Naive thymus-derived CD4-positive, alpha-beta T cell (primary cell): ENCODE measurements at regions of chr5 and their contacts with region 1.

Region 1: GRCh38 chr5:134176511-134177368 is at the start of gene SKP1:
- DNase-seq: peak; percentile 80 to 93 (median 91)
- ATAC-seq: peak; percentile 92
- H3K4me3 ChIP-seq: peak within 1 kb of the TSS; percentile 96
- H3K4me3 Mint-ChIP-seq: peak within 1 kb of the TSS; percentile 90 to 99 (median 97)
- H3K27ac ChIP-seq: peak within 1 kb of the TSS; percentile 100
- H3K27ac Mint-ChIP-seq: peak within 1 kb of the TSS; percentile 98 to 99 (median 98)
- H3K4me1 ChIP-seq: peaks cover 25 to 30% of the 10 kb centered on the region in 2 donors
- H3K4me1 Mint-ChIP-seq: peaks cover 28 to 39% (median 32%) of the 10 kb centered on the region in 7 donors
- H3K27me3 ChIP-seq: no peaks in the 10 kb centered on the region
- H3K27me3 Mint-ChIP-seq: peaks cover 0 to 4% (median 0%) of the 10 kb centered on the region in 5 donors
- total RNA-seq, gene SKP1: 224 to 287 (median 268) TPM

Region 2: GRCh38 chr5:133968049-133968980 is 208.4 kb before region 1 on chr5 and contains the start of gene C5orf15:
- CTCF ChIA-PET with region 1: no interaction called
- POLR2A ChIA-PET with region 1: no interaction called
- intact Hi-C with region 1: loop called (anchors 1 to 2 kb)
- DNase-seq: peak; percentile 72 to 93 (median 87)
- ATAC-seq: peak; percentile 98
- H3K4me3 ChIP-seq: peak within 1 kb of the TSS; percentile 90
- H3K4me3 Mint-ChIP-seq: peak within 1 kb of the TSS; percentile 93 to 100 (median 98)
- H3K27ac ChIP-seq: peak within 1 kb of the TSS; percentile 94
- H3K27ac Mint-ChIP-seq: peak within 1 kb of the TSS; percentile 92 to 99 (median 97)
- H3K4me1 ChIP-seq: peaks cover 10 to 16% of the 10 kb centered on the region in 2 donors
- H3K4me1 Mint-ChIP-seq: peaks cover 21 to 63% (median 52%) of the 10 kb centered on the region in 7 donors
- H3K27me3 ChIP-seq: no peaks in the 10 kb centered on the region
- H3K27me3 Mint-ChIP-seq: no peaks in the 10 kb centered on the region
- total RNA-seq, gene C5orf15: 11.1 to 33.6 (median 17.9) TPM

Region 3: DNA sequence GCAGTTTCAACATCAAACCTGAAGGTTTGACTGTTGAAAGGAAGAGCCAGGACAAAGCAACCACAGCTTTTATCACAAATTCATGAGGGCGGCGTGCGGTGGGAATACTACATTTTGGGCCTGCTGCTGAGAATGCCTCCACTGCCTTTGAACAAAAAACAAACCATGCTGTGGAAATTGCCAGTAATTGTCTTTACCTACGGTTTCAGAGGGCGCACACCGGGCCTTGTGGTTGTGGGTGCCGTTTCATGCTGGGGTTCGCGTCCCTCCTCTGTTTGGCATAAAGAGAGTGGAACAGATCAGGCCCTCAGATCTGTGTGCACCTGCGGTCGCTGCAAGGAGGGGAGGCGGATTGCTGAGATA is 89.8 kb before region 1 on chr5:
- CTCF ChIA-PET with region 1: no interaction called
- POLR2A ChIA-PET with region 1: no interaction called
- intact Hi-C with region 1: loop called in 1 of 2 experiments (anchors 1 kb)
- DNase-seq: peak; percentile 45 to 96 (median 93)
- ATAC-seq: peak; percentile 87
- H3K4me3 ChIP-seq: peak overlapping the region; percentile 32
- H3K4me3 Mint-ChIP-seq: peak overlapping the region; percentile 74 to 87 (median 82)
- H3K27ac ChIP-seq: peak overlapping the region; percentile 66
- H3K27ac Mint-ChIP-seq: peak overlapping the region; percentile 81 to 99 (median 96)
- H3K4me1 ChIP-seq: peaks cover 59 to 87% of the 10 kb centered on the region in 2 donors
- H3K4me1 Mint-ChIP-seq: peaks cover 47 to 98% (median 85%) of the 10 kb centered on the region in 7 donors
- H3K27me3 ChIP-seq: no peaks in the 10 kb centered on the region
- H3K27me3 Mint-ChIP-seq: peaks cover 0 to 24% (median 0%) of the 10 kb centered on the region in 5 donors

Region 4: DNA sequence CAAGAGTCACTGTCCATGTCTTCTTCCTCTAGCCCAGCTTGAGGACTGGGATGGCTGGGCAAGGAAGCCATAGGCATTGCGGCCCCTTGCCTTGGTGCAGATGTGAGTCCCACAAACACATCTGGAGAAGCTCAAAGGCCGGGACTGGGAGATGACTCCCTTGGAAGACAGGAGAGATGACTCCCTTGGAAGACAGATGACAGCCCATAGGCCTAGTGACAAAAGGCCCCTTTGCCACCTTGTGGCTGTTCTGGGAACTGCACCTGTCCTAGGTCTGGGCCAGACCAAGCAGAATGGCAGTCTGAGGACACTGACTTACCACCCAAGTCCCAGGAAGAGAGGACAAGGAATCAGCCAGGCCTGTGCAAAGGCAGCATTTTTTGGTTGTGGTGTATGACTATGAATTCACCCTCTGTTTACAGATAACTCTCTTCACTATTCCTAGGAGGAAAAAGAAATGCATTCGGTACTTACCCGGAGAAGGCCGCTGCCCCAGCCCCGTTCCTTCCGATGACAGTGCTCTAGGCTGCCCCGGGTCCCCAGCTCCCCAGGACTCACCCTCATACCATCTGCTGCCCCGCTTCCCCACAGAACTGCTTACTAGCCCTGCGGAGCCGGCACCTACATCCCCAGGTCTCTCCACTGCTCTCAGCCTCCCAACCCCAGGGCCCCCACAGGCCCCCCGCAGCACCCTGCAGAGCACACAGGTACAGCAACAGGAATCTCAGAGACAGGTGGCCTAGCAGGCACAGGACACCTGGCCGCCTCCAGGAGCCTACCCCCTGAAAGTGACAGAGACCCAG is 30.8 kb before region 1 on chr5:
- CTCF ChIA-PET with region 1: no interaction called
- POLR2A ChIA-PET with region 1: interaction called, 164 read pairs
- intact Hi-C with region 1: loop called in 1 of 2 experiments (anchors 1 kb)
- DNase-seq: peak; percentile 64 to 87 (median 77)
- ATAC-seq: peak; percentile 84
- H3K4me3 ChIP-seq: no peak overlapping the region
- H3K4me3 Mint-ChIP-seq: peak overlapping the region in 4 of 10 donors; percentile 18 to 54 (median 27)
- H3K27ac ChIP-seq: peak overlapping the region; percentile 63
- H3K27ac Mint-ChIP-seq: peak overlapping the region in 8 of 9 donors; percentile 75 to 93 (median 90)
- H3K4me1 ChIP-seq: peaks cover 5 to 29% of the 10 kb centered on the region in 2 donors
- H3K4me1 Mint-ChIP-seq: peaks cover 21 to 67% (median 46%) of the 10 kb centered on the region in 7 donors
- H3K27me3 ChIP-seq: no peaks in the 10 kb centered on the region
- H3K27me3 Mint-ChIP-seq: no peaks in the 10 kb centered on the region

Region 5: DNA sequence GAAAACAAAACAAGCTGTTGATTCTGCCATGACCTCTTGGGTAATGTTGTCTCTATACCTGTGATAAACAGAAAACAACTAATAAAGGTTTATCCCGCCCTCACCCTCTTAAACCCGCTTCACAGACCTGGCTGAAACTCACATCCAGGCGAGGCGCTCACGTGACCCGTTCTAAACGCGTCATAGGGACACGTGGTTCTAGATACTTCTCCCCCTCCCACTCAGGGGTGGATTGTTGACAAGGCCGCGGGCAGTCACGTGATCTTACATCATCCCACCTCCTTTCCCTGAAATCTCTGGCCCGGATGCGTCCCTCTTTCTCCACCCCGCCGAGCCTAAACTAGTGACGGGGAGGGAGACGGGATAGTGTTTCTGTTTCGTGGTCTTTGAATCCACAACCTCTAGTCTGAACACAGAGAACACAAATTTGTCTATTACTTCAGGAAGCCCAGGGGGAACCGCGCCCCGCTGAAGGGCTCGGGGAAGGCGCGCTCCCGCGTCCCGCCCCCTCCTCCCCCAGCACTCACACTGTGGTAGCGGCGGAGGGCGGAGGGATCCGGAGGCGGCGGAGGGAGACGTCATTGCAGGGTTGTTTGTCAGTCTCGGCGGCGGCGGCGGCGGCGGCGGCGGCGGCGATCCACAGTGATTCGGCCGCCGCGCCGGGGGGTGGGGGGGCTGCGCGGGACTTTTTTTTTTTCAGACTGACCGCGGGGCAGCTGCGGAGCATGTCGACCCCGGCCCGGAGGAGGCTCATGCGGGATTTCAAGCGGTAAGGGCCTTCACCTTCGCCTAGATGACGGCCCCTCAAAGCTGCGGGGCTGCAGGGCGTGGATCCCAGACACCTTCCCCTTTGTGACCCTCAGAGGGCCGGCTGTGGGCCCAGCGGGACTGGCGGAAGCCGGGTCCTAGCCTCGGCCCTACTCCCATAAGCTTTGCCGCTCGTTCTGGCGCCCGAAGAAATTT is 194.4 kb after region 1 on chr5 and contains the start of gene UBE2B:
- CTCF ChIA-PET with region 1: no interaction called
- POLR2A ChIA-PET with region 1: interaction called, 4 read pairs
- intact Hi-C with region 1: loop called (anchors 1 kb)
- DNase-seq: peak; percentile 96 to 99 (median 98)
- ATAC-seq: peak; percentile 86
- H3K4me3 ChIP-seq: peak within 1 kb of the TSS; percentile 94
- H3K4me3 Mint-ChIP-seq: peak within 1 kb of the TSS; percentile 82 to 99 (median 96)
- H3K27ac ChIP-seq: peak within 1 kb of the TSS; percentile 100
- H3K27ac Mint-ChIP-seq: peak within 1 kb of the TSS; percentile 97 to 100 (median 100)
- H3K4me1 ChIP-seq: peaks cover 25 to 38% of the 10 kb centered on the region in 2 donors
- H3K4me1 Mint-ChIP-seq: peaks cover 30 to 76% (median 60%) of the 10 kb centered on the region in 7 donors
- H3K27me3 ChIP-seq: no peaks in the 10 kb centered on the region
- H3K27me3 Mint-ChIP-seq: peaks cover 0 to 8% (median 0%) of the 10 kb centered on the region in 5 donors
- total RNA-seq, gene UBE2B: 91.4 to 141 (median 124) TPM

Region 6: DNA sequence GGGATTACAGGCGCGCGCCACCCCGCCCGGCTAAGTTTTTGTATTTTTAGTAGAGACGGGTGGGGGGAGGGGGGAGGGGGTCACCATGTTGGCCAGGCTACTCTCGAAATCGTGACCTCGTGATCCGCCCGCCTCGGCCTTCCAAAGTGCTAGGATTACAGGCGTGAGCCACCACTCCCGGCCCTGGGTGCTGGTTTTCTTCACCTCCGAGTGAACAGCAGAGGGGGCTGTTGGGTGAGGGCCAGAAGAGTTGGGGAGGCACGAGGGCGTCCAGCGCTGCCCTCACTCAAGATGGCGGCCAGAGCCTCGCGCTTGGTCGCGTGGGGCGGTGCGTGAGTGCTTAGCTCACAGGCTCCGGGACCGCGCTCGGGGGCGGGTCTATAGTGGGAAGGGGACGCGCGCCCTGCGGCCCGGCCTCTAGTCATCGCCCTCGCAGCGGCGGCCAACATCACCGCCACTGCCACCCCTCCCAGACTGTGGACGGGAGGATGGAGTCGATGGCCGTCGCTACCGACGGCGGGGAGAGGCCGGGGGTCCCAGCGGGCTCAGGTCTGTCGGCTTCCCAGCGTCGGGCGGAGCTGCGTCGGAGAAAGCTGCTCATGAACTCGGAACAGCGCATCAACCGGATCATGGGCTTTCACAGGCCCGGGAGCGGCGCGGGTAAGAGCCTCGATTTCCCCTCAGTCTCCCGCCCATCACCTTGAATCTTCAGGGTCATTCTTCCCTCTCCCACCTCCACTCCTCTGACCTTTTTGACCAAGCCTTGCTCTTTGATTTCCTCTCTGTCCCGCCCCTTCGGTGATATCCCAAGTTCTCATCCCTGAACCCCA is 561.6 kb after region 1 on chr5 and contains the start of gene CAMLG:
- CTCF ChIA-PET with region 1: no interaction called
- POLR2A ChIA-PET with region 1: no interaction called
- intact Hi-C with region 1: loop called (anchors 1 to 2 kb)
- DNase-seq: peak; percentile 93 to 96 (median 96)
- ATAC-seq: peak; percentile 98
- H3K4me3 ChIP-seq: peak within 1 kb of the TSS; percentile 91
- H3K4me3 Mint-ChIP-seq: peak within 1 kb of the TSS; percentile 88 to 100 (median 96)
- H3K27ac ChIP-seq: peak within 1 kb of the TSS; percentile 93
- H3K27ac Mint-ChIP-seq: peak within 1 kb of the TSS; percentile 90 to 98 (median 93)
- H3K4me1 ChIP-seq: peaks cover 8 to 10% of the 10 kb centered on the region in 2 donors
- H3K4me1 Mint-ChIP-seq: peaks cover 9 to 34% (median 29%) of the 10 kb centered on the region in 7 donors
- H3K27me3 ChIP-seq: no peaks in the 10 kb centered on the region
- H3K27me3 Mint-ChIP-seq: no peaks in the 10 kb centered on the region
- total RNA-seq, gene CAMLG: 20.4 to 38.1 (median 31.8) TPM